ENCODE measurements at regions of chr3 and their contacts with region 1.

Region 1: DNA sequence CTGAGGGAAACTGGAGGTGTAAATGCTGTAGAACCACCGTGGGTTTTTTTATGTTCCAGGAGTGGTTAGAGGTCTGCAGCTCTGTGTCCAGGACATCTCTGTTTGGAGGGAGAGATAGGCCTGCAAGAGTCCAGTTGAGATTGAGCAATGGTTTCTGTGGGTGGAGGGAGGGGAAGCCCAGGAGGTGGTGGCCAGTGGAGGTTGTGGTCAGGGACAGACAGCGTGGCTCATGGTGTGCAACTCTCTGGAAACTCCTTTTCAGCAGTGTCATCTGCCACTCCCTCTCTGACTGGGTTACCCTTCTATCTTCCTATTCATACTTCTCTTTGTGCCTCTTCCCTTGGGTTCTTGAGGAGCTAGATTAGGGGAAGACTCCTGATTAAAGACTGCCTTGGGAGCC is 9.6 kb downstream of the XCR1 start:
- DNase-seq: no peak
- H3K4me3 Mint-ChIP-seq: peak overlapping the region; percentile 4
- H3K27ac Mint-ChIP-seq: peak overlapping the region; percentile 79
- H3K4me1 Mint-ChIP-seq: peaks cover 42% of the 10 kb centered on the region
- H3K27me3 Mint-ChIP-seq: peaks cover 10% of the 10 kb centered on the region

Region 2: DNA sequence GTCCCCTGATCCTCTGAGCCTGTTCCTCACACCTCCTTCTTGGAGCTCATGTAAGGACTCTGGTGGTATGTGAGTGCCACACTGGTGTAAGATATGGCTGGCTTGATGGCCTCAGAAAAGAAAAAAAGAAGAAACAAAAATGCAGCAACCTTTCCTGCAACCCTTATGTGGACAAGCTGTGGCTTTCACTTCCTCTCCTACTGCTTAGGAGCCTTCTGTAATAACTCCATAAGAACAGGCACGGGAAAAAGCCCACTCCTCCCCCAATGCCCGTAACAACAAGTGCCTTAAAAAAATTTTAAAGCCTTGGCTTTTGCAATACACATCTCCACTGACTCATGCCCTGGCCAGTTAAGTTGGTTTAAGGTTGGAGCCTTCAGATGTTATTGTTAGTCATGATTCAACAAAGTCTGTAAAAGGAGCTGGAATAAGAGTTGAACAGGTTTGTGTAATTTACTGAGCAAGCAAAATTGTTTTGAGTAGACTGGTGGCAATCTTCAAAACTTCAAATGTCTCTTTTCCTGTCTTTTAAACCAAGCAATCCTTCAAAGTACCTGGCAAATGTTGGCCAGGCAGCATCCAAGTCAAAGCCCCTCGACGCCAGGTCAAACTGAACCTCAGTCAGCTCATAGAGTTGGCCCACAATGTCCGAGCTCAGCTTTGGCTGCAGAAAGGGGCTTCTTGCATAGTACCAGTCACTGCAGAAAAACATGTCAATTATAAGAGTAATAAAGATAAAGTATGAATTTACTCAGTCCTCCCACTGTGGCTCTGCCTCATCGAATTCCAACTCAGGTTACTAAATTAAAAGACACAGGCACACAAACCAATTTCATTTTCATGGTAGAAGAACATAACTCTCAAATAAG is 45.0 kb before region 1 on chr3:
- intact Hi-C with region 1: loop called (anchors 2 kb)
- DNase-seq: no peak
- H3K4me3 Mint-ChIP-seq: peak overlapping the region; percentile 33
- H3K27ac Mint-ChIP-seq: peak overlapping the region; percentile 72
- H3K4me1 Mint-ChIP-seq: peaks cover 76% of the 10 kb centered on the region
- H3K27me3 Mint-ChIP-seq: no peaks in the 10 kb centered on the region